SK-N-SH (cell line): ENCODE measurements at regions of chr2 and their contacts with region 1.

Region 1: DNA sequence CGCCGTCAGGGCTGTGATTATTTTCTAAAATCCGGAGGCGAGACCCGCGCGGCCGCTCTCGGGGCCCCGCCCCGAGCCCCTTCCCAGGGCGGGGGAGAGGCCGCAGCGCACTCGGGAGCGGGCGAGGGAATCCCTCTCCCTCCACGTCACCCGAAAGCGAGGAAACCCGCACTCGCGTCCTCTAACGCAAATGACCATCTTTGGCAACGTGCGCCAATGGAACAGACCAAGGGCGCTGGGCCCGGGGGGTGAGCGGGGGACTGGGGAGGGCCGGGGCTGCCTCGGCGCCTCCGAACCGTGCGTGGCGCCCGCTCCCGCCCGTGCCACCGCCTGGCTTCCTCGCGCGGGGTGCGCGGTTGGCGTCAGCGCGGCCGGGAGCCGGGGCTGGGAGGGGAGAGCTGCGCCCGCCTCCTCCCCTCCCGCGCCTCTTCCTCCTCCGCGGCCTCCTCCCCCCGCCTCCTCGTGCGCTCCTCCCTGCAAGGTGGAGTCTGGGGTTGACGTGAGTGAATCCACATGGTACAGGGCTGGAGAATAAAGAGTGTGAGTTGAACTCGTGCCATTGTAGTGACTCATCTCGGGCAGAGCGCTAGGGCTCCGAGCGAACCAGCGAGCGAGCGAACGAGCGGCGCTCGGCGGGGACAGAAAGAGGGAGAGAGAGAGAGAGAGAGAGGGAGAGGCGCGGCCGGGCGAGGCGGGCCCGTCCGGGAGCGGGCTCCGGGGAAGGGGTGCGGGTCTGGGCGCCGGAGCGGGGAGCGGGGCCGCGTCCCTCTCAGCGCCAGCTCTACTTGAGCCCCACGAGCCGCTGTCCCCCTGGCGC is at the start of gene FOSL2:
- DNase-seq: peak; percentile 98
- H3K4me3 ChIP-seq: peak within 1 kb of the TSS; percentile 83 to 84
- H3K27ac ChIP-seq: peak within 1 kb of the TSS; percentile 86 to 97
- H3K4me1 ChIP-seq: peaks cover 23 to 24% of the 10 kb centered on the region in 2 experiments
- H3K27me3 ChIP-seq: no peaks in the 10 kb centered on the region
- CTCF ChIP-seq: no peak
- EP300 ChIP-seq: 0 out of 4 replicates have a peak, but pooled peaks have one; percentile 8 to 24
- RAD21 ChIP-seq: peak; percentile 34
- polyA plus RNA-seq, gene FOSL2: 30.1 and 41.7 TPM in 2 replicates

Region 2: GRCh38 chr2:27509326-27509725 is 883.2 kb before region 1 on chr2:
- CTCF ChIA-PET with region 1: no interaction called
- POLR2A ChIA-PET with region 1: no interaction called
- DNase-seq: no peak
- H3K4me3 ChIP-seq: no peak overlapping the region
- H3K27ac ChIP-seq: no peak overlapping the region
- H3K4me1 ChIP-seq: peaks cover 0 to 4% of the 10 kb centered on the region in 2 experiments; a peak in 1 of 4 replicates
- H3K27me3 ChIP-seq: no peaks in the 10 kb centered on the region; the same call in 1 of the 2 replicates
- CTCF ChIP-seq: no peak
- EP300 ChIP-seq: no peak
- RAD21 ChIP-seq: no peak

Region 3: DNA sequence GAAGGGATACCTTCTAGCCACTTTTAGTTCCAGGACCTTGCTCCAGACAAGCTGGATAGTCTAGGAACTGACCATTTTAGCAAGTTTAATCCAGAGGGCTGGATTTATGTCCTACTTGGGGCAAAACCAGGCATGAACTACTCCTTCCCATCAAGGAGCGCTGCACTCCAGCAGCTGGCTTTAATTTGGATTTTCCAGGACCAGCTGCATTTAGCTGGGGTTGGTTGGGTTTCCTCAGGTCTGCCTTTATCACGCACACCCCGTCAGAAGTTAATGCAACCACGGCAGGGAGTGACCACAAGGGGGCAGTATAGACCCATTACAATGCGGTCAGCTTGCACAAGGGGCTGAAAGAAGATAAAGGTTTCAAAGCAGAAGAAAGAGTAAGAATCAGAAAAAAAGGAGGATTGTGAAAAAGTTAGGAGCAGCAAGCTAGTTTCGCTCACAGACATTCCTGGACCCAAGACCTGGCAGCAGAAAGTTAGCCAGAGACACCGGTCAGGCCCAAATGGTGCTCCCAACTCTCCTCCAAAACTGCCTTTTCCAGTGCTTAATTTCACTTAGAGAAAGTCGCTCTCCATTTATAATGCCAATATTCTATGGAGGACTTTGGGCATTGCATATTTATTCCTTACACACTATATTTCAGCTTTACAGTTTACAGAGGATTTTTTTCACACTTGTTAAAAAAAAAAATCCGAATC is 688.7 kb before region 1 on chr2:
- CTCF ChIA-PET with region 1: interaction called, 67 read pairs
- POLR2A ChIA-PET with region 1: interaction called, 6 read pairs
- DNase-seq: peak; percentile 88
- H3K4me3 ChIP-seq: no peak overlapping the region; a peak in 1 of 4 replicates
- H3K27ac ChIP-seq: peak overlapping the region in 1 of 2 experiments; percentile 29; a peak in 1 of 4 replicates
- H3K4me1 ChIP-seq: peaks cover 10 to 16% of the 10 kb centered on the region in 2 experiments; a peak in 3 of 4 replicates
- H3K27me3 ChIP-seq: no peaks in the 10 kb centered on the region
- CTCF ChIP-seq: peak; percentile 99
- EP300 ChIP-seq: peak in 1 of 2 experiments; percentile 48; a peak in 1 of 4 replicates
- RAD21 ChIP-seq: peak; percentile 98

Region 4: GRCh38 chr2:27754138-27754588 is 638.3 kb before region 1 on chr2:
- CTCF ChIA-PET with region 1: interaction called, 20 read pairs
- POLR2A ChIA-PET with region 1: no interaction called
- DNase-seq: peak; percentile 83
- H3K4me3 ChIP-seq: peak overlapping the region in 1 of 2 experiments; percentile 13; a peak in 1 of 4 replicates
- H3K27ac ChIP-seq: no peak overlapping the region
- H3K4me1 ChIP-seq: no peaks in the 10 kb centered on the region
- H3K27me3 ChIP-seq: no peaks in the 10 kb centered on the region
- CTCF ChIP-seq: peak; percentile 98
- EP300 ChIP-seq: no peak
- RAD21 ChIP-seq: peak; percentile 100

Region 5: DNA sequence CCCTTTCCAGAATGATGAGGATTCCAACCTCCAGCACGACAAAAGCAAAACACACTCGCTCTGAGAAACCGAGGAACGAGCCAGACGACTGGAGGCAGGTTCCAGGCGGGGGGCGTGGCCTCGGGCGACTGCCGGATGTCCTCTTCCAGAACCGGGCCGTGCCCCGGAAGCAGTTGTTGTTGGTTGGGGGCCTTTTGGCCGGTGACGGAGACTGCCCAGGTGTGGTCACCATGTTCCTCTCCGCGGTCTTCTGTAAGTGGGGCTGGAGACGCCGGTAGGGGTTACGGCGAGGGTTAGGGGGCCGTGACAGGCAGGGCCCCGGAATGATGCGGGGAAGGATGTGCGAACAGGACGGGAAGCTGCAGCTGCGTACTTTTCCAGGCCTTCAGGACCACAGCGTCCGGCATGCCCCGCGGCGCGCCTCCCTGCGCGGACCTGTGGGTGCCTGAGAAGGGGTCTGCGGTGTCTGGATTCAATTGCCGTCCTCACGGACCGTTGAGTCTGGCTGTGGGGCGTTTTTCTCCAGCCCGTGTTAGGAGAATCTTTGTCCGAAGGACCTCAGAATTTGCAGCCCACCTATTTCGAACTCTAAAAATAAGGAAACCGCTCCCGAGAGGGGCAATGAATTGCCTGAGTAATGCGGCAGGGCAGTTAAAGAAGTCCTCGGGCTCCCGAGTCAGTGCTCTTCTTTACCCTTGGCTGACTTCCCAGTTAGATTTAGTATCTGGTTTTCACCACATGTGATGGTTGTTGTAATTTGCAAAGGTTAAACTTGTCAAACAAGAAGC is 620.8 kb before region 1 on chr2 and contains the start of gene MRPL33:
- CTCF ChIA-PET with region 1: interaction called, 5 read pairs
- POLR2A ChIA-PET with region 1: interaction called, 10 read pairs
- DNase-seq: peak; percentile 99
- H3K4me3 ChIP-seq: peak within 1 kb of the TSS; percentile 78 to 98
- H3K27ac ChIP-seq: peak within 1 kb of the TSS; percentile 77 to 99
- H3K4me1 ChIP-seq: peaks cover 0 to 22% of the 10 kb centered on the region in 2 experiments; a peak in 3 of 4 replicates
- H3K27me3 ChIP-seq: no peaks in the 10 kb centered on the region
- CTCF ChIP-seq: no peak
- EP300 ChIP-seq: peak; percentile 4 to 28; a peak in 2 of 4 replicates
- RAD21 ChIP-seq: peak; percentile 17; the same call in 1 of the 2 replicates
- polyA plus RNA-seq, gene MRPL33: 132 and 153 TPM in 2 replicates

Region 6: GRCh38 chr2:27890146-27890923 is 502.2 kb before region 1 on chr2 and contains the starts of genes BABAM2 and RBKS:
- CTCF ChIA-PET with region 1: interaction called, 5 read pairs
- POLR2A ChIA-PET with region 1: interaction called, 13 read pairs
- DNase-seq: peak; percentile 100
- H3K4me3 ChIP-seq: peak within 1 kb of the TSS; percentile 78 to 100
- H3K27ac ChIP-seq: peak within 1 kb of the TSS; percentile 93 to 97
- H3K4me1 ChIP-seq: peaks cover 7 to 19% of the 10 kb centered on the region in 2 experiments; a peak in 3 of 4 replicates
- H3K27me3 ChIP-seq: no peaks in the 10 kb centered on the region
- CTCF ChIP-seq: no peak
- EP300 ChIP-seq: 0 out of 4 replicates have a peak, but pooled peaks of 1 of the 2 experiments have one; percentile 7
- RAD21 ChIP-seq: no peak
- polyA plus RNA-seq, gene BABAM2: 28.5 and 34.0 TPM in 2 replicates
- polyA plus RNA-seq, gene RBKS: 7.2 and 7.4 TPM in 2 replicates

Region 7: DNA sequence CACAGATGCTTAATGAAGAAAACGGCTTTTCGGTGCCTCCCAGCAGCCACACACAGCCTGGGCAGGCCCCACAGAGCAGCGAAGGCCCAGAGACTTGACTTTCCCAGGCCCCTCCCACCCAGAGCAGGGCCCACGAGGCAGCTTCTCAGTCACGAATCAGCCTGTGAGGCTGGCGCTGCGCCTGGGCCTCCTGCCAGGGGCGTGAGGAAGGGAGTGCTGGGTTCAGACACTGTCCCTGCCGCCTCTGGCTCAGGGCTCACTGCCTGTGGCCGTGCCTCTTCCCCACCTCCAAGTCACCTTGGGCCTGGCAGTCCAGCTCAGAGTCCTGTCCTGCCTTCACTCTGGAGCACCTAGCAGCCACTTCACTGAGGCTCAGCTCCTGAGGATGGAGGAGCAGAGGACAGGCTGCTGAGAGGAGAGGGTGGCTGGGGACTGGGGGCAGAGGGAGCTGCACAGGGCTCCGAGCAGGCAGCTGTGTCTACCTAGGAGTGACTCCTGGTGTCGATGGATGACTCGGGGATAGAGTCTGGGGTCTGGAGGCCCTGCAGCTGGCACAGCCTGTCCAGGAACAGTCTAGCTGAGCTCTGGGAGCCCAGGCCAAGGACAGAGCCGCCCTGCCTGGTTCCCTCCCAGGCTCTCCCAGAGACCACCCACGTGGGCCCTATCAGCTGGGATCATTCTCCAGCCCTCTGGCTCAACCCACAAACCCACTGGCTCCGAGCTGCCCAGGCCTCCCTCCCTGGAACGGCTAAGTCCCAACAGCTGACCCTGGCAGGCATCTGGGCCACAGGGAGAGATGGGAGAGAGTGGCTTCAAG is 36.2 kb before region 1 on chr2:
- CTCF ChIA-PET with region 1: interaction called, 8 read pairs
- POLR2A ChIA-PET with region 1: interaction called, 79 read pairs
- DNase-seq: peak; percentile 90
- H3K4me3 ChIP-seq: no peak overlapping the region
- H3K27ac ChIP-seq: peak overlapping the region; percentile 60 to 97
- H3K4me1 ChIP-seq: peaks cover 13 to 40% of the 10 kb centered on the region in 2 experiments; a peak in 3 of 4 replicates
- H3K27me3 ChIP-seq: no peaks in the 10 kb centered on the region
- CTCF ChIP-seq: no peak
- EP300 ChIP-seq: no peak
- RAD21 ChIP-seq: no peak; the same call in 1 of the 2 replicates

Region 8: DNA sequence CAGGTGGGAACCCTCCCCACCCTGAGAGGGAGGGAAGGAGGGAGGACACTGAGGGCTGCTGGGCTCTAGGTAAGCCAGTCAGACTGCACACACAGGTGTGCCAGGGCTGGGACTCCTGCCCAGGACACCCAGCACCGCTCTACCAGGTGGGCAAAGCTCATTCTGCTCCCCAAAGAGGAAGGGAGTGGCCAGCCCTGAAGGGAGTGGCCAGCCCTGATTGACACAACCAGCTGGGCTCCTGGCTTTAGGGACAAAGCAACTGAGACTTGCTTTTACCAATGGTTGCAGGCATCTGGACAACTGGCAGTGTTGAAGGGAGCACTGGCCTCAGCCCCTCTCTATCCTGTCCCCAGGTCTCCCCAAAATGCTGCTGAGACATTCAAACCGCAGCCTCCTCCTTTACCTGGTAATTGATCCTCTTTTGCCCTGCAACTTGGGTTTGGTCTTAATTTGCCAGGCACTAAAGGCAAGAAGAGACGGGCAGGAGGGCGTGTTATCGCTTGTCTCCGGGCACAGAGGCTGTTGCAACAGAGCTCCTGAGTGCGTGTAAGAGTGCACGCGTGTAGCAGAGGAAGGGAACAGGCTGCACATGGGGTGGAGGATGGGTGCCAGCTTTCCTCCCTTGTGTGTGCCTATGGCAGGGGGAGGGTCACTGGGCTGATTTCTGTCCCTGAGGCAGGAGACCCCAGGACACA is 14.4 kb before region 1 on chr2:
- CTCF ChIA-PET with region 1: interaction called, 13 read pairs
- POLR2A ChIA-PET with region 1: interaction called, 3 read pairs
- DNase-seq: no peak
- H3K4me3 ChIP-seq: no peak overlapping the region
- H3K27ac ChIP-seq: no peak overlapping the region
- H3K4me1 ChIP-seq: peaks cover 0 to 6% of the 10 kb centered on the region in 2 experiments; a peak in 1 of 4 replicates
- H3K27me3 ChIP-seq: no peaks in the 10 kb centered on the region
- CTCF ChIP-seq: no peak
- EP300 ChIP-seq: no peak
- RAD21 ChIP-seq: no peak

Region 9: DNA sequence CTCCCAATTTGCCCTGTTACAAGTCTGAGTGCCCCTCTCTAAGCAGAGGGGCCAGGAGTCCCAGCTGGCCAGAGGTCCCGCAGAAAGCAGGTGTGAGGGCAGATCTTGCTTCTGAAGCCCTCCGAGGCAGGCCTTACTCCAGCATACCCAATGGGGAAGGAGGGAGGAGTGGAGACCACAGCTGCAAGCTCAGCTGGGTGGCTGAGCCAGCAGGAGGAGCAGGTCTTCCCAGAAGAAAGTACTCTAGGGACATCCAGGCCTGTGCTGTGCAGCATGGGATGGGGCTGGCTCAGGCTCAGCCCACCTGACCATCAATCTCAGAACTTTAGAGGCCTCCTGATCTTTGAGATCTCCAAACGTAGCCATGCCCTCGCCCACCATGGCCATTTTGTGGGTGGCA is 134.7 kb after region 1 on chr2:
- CTCF ChIA-PET with region 1: no interaction called
- POLR2A ChIA-PET with region 1: no interaction called
- DNase-seq: no peak
- H3K4me3 ChIP-seq: no peak overlapping the region
- H3K27ac ChIP-seq: no peak overlapping the region
- H3K4me1 ChIP-seq: peaks cover 0 to 3% of the 10 kb centered on the region in 2 experiments; a peak in 1 of 4 replicates
- H3K27me3 ChIP-seq: peaks cover 35% of the 10 kb centered on the region
- CTCF ChIP-seq: no peak
- EP300 ChIP-seq: no peak
- RAD21 ChIP-seq: no peak